Heart left ventricle (tissue), 16 donors: ENCODE measurements at regions of chr10 and their contacts with region 1.

Region 1: DNA sequence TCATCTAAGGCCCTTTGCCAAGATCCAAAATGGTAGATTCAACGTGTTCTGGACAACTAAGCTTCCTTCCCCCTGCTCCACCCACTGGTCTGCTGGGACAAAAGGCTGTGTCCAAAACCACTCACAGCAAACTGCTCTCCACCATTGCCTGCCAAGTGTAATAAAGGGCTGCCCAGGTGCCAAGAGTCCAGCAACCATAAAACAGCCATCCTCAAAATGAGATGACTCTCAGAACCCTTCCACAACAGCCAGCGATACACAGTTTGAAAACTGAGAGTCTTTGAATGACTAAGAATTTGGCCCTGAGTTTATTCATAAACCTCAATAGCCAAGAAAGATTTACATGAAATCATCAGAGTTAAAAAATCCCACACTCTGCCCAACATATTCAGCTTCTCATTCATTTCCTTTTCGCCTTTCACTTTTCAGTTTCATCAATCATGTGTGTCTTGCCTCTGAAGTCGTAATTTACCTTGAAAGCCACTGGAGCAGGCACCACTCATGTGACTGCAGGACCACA is 658.1 kb upstream of the MGMT start:
- DNase-seq: peak in 1 of 5 donors; percentile 50
- ATAC-seq: peak in 3 of 4 donors; percentile 47 to 64 (median 55)
- H3K4me3 ChIP-seq: no peak overlapping the region
- H3K27ac ChIP-seq: no peak overlapping the region
- H3K4me1 ChIP-seq: peaks cover 0 to 4% (median 0%) of the 10 kb centered on the region in 12 donors
- H3K27me3 ChIP-seq: no peaks in the 10 kb centered on the region
- CTCF ChIP-seq: no peak
- POLR2A ChIP-seq: no peak

Region 2: GRCh38 chr10:128606055-128606454 is 202.9 kb before region 1 on chr10:
- intact Hi-C with region 1: no loop called
- DNase-seq: no peak
- ATAC-seq: no peak
- H3K4me3 ChIP-seq: no peak overlapping the region
- H3K27ac ChIP-seq: no peak overlapping the region
- H3K4me1 ChIP-seq: no peaks in the 10 kb centered on the region
- H3K27me3 ChIP-seq: no peaks in the 10 kb centered on the region
- CTCF ChIP-seq: no peak
- POLR2A ChIP-seq: no peak

Region 3: DNA sequence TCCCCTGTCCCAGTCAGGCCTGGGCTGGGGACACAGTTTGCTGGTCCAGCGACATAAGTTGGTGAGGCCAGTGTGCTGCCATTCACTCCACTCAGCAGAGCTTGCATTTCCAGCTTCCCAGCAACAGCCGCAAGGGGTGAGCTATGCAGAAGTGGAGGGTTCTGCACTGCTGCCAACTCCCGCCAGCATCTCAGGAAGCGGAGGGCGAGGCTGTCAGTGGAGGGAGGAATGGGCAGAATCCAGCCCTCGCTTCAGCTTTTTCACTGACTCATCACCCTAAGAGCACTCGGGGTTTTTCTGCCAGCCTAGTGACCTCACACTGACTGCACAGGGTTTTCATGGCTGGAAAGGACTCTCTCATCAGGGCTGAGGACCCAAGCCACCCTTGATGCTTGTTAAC is 57.7 kb before region 1 on chr10:
- intact Hi-C with region 1: loop called in 1 of 10 experiments (anchors 10 kb)
- DNase-seq: peak in 1 of 5 donors; percentile 38
- ATAC-seq: no peak
- H3K4me3 ChIP-seq: no peak overlapping the region
- H3K27ac ChIP-seq: no peak overlapping the region
- H3K4me1 ChIP-seq: no peaks in the 10 kb centered on the region
- H3K27me3 ChIP-seq: peaks cover 0 to 5% (median 0%) of the 10 kb centered on the region in 9 donors
- CTCF ChIP-seq: no peak
- POLR2A ChIP-seq: no peak

Region 4: DNA sequence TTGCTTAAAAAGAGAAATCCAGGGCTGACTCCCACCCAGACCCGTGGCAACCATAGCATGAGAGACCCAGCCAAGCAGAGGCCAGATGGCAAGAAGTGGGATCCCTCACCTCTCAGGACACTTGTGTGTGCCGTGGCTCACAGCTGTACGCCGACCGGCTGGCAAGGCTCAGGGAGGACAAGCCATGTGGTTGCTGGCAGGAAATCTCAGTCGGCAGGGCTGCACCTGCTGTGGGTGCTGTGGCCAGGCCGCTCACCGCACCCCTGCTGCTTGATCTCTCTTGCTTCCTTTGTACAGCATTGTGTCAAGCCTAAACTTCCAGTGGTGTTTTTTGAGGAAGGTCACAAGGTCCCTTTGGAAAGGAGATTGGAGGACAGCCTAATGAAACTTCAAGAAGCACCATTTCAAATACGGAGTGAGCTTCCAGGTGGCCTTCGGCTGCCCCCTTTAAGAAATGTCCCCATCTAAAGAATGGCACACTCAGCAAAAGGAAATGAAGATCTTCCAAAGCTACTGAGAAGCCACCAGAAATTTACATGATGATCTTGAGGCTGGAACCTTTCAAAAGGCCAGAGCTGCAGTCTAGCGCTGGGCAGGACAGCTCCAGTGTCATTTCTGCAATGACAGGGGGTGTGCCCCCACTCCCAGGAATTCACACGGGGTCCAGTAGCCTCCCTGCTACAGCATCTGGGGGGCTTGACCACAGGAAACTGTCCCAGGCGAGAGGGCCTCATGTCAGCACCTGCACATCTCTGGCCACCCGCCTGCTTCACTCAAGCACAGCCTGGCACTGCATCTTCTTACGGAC is 249.1 kb after region 1 on chr10:
- intact Hi-C with region 1: no loop called
- DNase-seq: no peak
- ATAC-seq: no peak
- H3K4me3 ChIP-seq: no peak overlapping the region
- H3K27ac ChIP-seq: no peak overlapping the region
- H3K4me1 ChIP-seq: no peaks in the 10 kb centered on the region
- H3K27me3 ChIP-seq: no peaks in the 10 kb centered on the region
- CTCF ChIP-seq: no peak
- POLR2A ChIP-seq: no peak